Right ventricle myocardium superior (tissue), 1 donor: ENCODE measurements at regions of chr16 and their contacts with region 1.

Region 1: GRCh38 chr16:11255737-11256660 is at the start of gene SOCS1:
- DNase-seq: peak; percentile 90
- ATAC-seq: peak; percentile 81
- total RNA-seq, gene SOCS1: 3.7 TPM

Region 2: GRCh38 chr16:10964039-10964890 is 291.7 kb before region 1 on chr16:
- intact Hi-C with region 1: loop called (anchors 2 kb)
- DNase-seq: peak; percentile 89
- ATAC-seq: peak; percentile 94

Region 3: DNA sequence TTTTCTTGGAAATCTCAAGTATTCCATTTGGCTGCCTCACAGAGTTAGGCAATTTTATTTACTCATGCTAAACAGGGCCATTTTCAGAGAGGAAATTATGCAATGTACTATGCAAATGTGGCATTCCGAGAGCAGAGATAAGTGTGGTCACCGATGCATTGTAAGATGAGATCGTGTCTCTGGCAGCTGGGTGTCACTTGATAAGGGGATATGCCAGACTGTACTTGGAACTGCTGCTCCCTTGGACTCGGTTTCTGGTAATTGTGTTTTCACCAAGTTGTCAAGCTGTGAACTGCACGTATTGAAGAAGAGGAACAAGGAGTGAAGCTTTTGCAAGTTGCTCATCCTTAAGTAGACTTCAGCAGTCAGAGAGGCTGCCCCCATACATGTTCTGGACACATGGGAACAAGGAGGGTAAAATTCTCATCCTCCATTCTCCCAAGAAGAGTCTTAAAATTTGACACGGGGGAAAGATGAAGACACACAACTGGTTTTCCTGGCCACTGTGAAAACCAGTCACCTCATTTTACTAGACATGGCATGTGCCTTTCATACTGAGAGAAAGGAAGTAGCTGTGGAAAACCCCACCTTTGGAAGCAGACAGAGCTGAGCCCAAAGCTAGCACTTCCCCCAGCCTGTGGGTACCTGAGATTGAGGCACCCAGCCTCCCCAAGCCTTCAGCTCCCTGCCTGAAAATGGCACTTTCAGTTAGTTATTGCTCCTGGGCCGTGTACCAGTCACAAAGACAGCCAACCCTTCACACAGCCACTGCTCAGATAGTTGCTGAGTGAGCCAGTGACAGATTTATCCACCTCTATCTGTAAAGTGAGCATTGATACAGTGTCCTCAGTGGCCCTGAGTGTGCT is 150.7 kb before region 1 on chr16:
- intact Hi-C with region 1: loop called (anchors 5 kb)
- DNase-seq: no peak
- ATAC-seq: peak; percentile 71

Region 4: DNA sequence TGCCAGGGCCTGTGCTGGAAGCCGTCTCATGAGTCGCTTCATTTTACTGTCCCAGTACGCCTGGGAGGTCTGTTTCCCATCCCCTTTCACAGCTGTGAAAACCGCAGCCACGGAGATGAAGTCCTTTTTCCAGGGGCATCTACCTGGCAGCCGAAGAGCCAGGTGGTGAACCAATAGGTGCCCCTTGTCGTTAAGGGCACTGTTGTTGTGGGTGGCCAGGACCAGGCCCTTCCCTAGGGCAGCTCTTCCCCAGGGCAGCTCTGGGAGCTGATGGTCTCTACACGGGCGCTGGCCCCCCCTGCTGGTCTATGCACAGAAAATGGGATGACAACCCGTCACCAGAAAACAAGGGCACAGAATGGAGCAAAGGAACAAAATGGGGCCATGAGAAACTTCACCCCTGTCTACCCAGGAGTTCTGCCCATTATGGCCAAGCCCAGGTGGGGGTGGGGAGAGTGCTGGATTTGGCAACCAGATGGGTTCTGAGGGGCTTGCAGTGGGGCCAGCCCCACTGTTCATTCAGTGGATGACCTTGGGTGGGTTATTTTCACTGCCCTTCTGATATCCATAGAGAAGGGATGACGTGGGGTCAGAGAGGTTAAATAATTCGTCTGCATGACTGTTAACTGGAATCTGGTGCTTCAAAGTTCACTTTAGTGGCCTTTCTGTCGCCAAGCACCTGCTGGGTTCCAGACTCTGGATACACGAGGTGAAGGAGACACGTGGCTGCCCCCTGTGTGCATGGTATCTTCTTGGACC is 100.8 kb after region 1 on chr16:
- intact Hi-C with region 1: loop called (anchors 5 kb)
- DNase-seq: peak; percentile 82
- ATAC-seq: peak; percentile 57